Heart left ventricle (tissue), 16 donors: ENCODE measurements at regions of chr7 and their contacts with region 1.

Region 1: GRCh38 chr7:111730476-111731300 is 168.4 kb upstream of the IMMP2L start:
- DNase-seq: no peak
- ATAC-seq: peak in 1 of 4 donors; percentile 46
- H3K4me3 ChIP-seq: no peak overlapping the region
- H3K27ac ChIP-seq: no peak overlapping the region
- H3K4me1 ChIP-seq: peaks cover 0 to 9% (median 5%) of the 10 kb centered on the region in 12 donors
- H3K27me3 ChIP-seq: no peaks in the 10 kb centered on the region
- CTCF ChIP-seq: peak in 10 of 12 donors; percentile 24 to 56 (median 36)
- POLR2A ChIP-seq: no peak

Region 2: DNA sequence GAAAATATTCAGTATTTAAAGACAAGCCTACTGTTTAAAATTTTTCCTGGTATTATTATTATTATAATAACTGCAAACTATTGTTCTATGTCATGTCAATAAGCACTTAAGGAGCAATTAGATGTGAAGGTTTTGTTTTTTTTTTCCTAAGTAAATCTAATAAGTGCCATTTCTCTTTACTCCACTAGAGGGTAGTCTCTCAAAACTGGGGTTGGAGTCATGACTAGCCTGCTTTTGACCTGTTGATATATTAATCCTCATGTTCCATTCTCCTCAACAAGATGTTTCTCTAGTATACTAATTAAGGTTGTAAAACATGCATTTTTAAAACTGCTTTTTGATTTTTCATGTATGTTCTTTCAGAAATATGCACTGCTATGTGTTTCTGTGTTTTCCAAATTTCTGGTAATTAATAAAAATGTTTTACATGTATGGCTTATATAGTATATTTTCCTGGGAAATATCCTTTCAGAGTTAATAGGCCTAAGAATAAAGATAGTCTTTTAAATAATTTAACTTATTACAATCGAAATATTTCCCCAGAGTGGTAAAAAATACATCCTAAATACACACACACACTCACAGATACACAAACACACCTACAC is 640.8 kb before region 1 on chr7:
- intact Hi-C with region 1: loop called in 8 of 10 experiments (anchors 5 to 10 kb)
- DNase-seq: no peak
- ATAC-seq: peak in 3 of 4 donors; percentile 37 to 81 (median 57)
- H3K4me3 ChIP-seq: no peak overlapping the region
- H3K27ac ChIP-seq: no peak overlapping the region
- H3K4me1 ChIP-seq: peaks cover 0 to 27% (median 8%) of the 10 kb centered on the region in 12 donors
- H3K27me3 ChIP-seq: no peaks in the 10 kb centered on the region
- CTCF ChIP-seq: peak; percentile 66 to 86 (median 76)
- POLR2A ChIP-seq: no peak

Region 3: GRCh38 chr7:111887734-111888133 is 157.0 kb after region 1 on chr7:
- intact Hi-C with region 1: no loop called
- DNase-seq: peak in 4 of 5 donors; percentile 25 to 36 (median 30)
- ATAC-seq: peak; percentile 26 to 86 (median 38)
- H3K4me3 ChIP-seq: no peak overlapping the region
- H3K27ac ChIP-seq: peak overlapping the region in 3 of 12 donors; percentile 15 to 28 (median 26)
- H3K4me1 ChIP-seq: peaks cover 0 to 2% (median 0%) of the 10 kb centered on the region in 12 donors
- H3K27me3 ChIP-seq: no peaks in the 10 kb centered on the region
- CTCF ChIP-seq: no peak
- POLR2A ChIP-seq: no peak